Caco-2 (cell line): ENCODE measurements at regions of chr4 and their contacts with region 1.

Region 1: DNA sequence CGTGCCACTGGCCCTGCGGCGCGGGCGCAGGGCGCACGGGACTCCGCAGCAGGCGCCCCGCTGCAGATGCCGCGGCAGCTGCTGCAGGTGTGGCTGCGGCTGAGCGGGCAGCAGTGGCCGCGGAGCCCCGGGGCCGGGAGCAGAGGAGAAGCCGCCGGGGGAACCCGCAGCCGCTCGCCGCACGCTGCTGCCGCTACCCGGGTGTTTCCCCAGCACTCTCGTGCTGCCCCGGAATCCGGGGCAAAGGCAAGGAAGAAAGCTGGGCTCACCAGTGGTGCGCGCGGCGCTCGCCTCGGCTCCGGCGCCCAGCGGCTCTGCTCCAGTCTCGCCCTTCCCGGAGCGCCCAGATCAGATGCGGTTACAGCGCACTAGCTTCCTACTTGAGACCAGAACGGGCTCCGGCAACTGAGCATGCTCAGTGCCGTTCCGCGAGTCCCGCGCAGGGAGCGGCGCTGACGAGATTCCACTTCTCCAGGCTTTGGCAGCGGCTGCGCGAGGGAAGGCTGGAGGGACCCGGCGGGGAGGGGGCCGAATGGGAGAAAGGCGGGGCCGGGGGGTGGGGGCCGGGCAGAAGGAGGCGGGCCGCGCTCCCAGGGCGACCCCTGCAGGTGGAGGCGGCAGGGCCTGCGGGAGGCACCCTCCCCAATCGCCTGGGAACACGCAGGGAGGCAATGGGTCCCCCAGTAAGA is at the start of gene APBB2:
- DNase-seq: peak; percentile 96
- H3K4me3 ChIP-seq: peak within 1 kb of the TSS; percentile 91
- H3K4me3 Mint-ChIP-seq: peak within 1 kb of the TSS; percentile 99
- H3K27ac Mint-ChIP-seq: peak within 1 kb of the TSS; percentile 93
- H3K4me1 ChIP-seq: peaks cover 27% of the 10 kb centered on the region
- H3K4me1 Mint-ChIP-seq: peaks cover 9% of the 10 kb centered on the region
- H3K27me3 ChIP-seq: no peaks in the 10 kb centered on the region
- H3K27me3 Mint-ChIP-seq: no peaks in the 10 kb centered on the region
- CTCF ChIP-seq: peak; percentile 82 to 94
- total RNA-seq, gene APBB2: 80.7 and 88.6 TPM in 2 replicates

Region 2: DNA sequence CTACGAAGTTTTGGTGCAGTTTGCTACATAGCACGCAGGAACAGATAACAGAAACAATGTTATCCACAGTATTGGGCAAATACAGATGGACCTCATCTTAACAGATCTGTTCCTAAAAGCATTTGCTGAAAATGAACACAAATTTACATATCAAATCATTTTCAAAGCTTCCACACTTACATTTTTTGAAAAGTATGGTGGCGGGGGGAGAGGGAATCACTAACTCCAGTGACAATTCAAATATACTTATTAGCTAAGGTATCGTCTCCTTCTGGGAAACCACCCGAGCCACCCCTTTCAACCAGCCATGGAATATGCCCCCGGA is 289.5 kb before region 1 on chr4:
- CTCF ChIA-PET with region 1: interaction called, 10 read pairs
- POLR2A ChIA-PET with region 1: no interaction called
- intact Hi-C with region 1: loop called (anchors 1 kb)
- DNase-seq: no peak
- H3K4me3 ChIP-seq: no peak overlapping the region
- H3K4me3 Mint-ChIP-seq: no peak overlapping the region
- H3K27ac Mint-ChIP-seq: no peak overlapping the region
- H3K4me1 ChIP-seq: no peaks in the 10 kb centered on the region
- H3K4me1 Mint-ChIP-seq: no peaks in the 10 kb centered on the region
- H3K27me3 ChIP-seq: no peaks in the 10 kb centered on the region
- H3K27me3 Mint-ChIP-seq: no peaks in the 10 kb centered on the region
- CTCF ChIP-seq: no peak

Region 3: GRCh38 chr4:40976343-40976742 is 237.9 kb before region 1 on chr4:
- CTCF ChIA-PET with region 1: interaction called, 17 read pairs
- POLR2A ChIA-PET with region 1: interaction called, 5 read pairs
- intact Hi-C with region 1: loop called (anchors 1 kb)
- DNase-seq: peak in 1 of 2 experiments; percentile 60
- H3K4me3 ChIP-seq: no peak overlapping the region
- H3K4me3 Mint-ChIP-seq: no peak overlapping the region
- H3K27ac Mint-ChIP-seq: no peak overlapping the region
- H3K4me1 ChIP-seq: no peaks in the 10 kb centered on the region
- H3K4me1 Mint-ChIP-seq: peaks cover 14% of the 10 kb centered on the region
- H3K27me3 ChIP-seq: no peaks in the 10 kb centered on the region
- H3K27me3 Mint-ChIP-seq: no peaks in the 10 kb centered on the region
- CTCF ChIP-seq: peak; percentile 59 to 64

Region 4: GRCh38 chr4:41124916-41125548 is 89.2 kb before region 1 on chr4:
- CTCF ChIA-PET with region 1: interaction called, 6 read pairs
- POLR2A ChIA-PET with region 1: interaction called, 6 read pairs
- intact Hi-C with region 1: loop called (anchors 2 kb)
- DNase-seq: peak; percentile 70 to 86
- H3K4me3 ChIP-seq: no peak overlapping the region
- H3K4me3 Mint-ChIP-seq: peak overlapping the region; percentile 60
- H3K27ac Mint-ChIP-seq: peak overlapping the region; percentile 96
- H3K4me1 ChIP-seq: peaks cover 92% of the 10 kb centered on the region
- H3K4me1 Mint-ChIP-seq: peaks cover 38% of the 10 kb centered on the region
- H3K27me3 ChIP-seq: no peaks in the 10 kb centered on the region
- H3K27me3 Mint-ChIP-seq: no peaks in the 10 kb centered on the region
- CTCF ChIP-seq: no peak

Region 5: DNA sequence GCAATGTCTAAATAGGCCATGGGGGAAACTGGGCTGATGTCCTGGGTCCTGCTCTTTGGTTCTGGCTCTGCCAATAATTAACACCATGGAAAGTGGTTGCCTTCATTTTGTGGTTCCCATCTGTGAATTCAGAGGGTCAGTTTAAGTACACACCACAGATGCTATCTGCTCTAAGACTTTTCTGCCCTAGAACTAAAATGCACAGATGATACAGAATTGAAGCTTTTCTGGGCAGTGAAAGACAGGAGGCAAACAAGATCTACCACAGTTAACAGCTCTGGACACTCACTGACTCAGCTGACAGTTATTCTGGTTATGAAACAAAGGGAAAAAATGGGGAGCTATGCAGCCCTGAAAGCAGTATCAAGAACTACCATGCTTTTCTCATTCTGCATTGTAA is 37.3 kb before region 1 on chr4:
- CTCF ChIA-PET with region 1: interaction called, 9 read pairs
- POLR2A ChIA-PET with region 1: no interaction called
- intact Hi-C with region 1: loop called (anchors 2 kb)
- DNase-seq: peak in 1 of 2 experiments; percentile 17
- H3K4me3 ChIP-seq: no peak overlapping the region
- H3K4me3 Mint-ChIP-seq: no peak overlapping the region
- H3K27ac Mint-ChIP-seq: peak overlapping the region; percentile 50
- H3K4me1 ChIP-seq: peaks cover 80% of the 10 kb centered on the region
- H3K4me1 Mint-ChIP-seq: peaks cover 40% of the 10 kb centered on the region
- H3K27me3 ChIP-seq: no peaks in the 10 kb centered on the region
- H3K27me3 Mint-ChIP-seq: no peaks in the 10 kb centered on the region
- CTCF ChIP-seq: no peak